Activated T-helper 2 cell treated with anti-CD3 and anti-CD28 coated beads, Interferon-gamma antibody, Interleukin-2, Interleukin-4, amounts not matched to agents 10 μg/mL and 5 μg/mL and 100 μg/mL, durations not matched to agents 14 hours and 24 hours and 36 hours (primary cell): ENCODE measurements at regions of chr14 and their contacts with region 1.

Region 1: GRCh38 chr14:103628684-103629502 is at the start of gene KLC1:
- DNase-seq: peak; percentile 78
- H3K4me3 Mint-ChIP-seq: peak within 1 kb of the TSS; percentile 86
- H3K27ac Mint-ChIP-seq: peak within 1 kb of the TSS; percentile 86
- H3K4me1 Mint-ChIP-seq: peaks cover 26% of the 10 kb centered on the region
- H3K27me3 Mint-ChIP-seq: no peaks in the 10 kb centered on the region
- total RNA-seq, gene KLC1: 161 and 169 TPM in 2 replicates

Region 2: DNA sequence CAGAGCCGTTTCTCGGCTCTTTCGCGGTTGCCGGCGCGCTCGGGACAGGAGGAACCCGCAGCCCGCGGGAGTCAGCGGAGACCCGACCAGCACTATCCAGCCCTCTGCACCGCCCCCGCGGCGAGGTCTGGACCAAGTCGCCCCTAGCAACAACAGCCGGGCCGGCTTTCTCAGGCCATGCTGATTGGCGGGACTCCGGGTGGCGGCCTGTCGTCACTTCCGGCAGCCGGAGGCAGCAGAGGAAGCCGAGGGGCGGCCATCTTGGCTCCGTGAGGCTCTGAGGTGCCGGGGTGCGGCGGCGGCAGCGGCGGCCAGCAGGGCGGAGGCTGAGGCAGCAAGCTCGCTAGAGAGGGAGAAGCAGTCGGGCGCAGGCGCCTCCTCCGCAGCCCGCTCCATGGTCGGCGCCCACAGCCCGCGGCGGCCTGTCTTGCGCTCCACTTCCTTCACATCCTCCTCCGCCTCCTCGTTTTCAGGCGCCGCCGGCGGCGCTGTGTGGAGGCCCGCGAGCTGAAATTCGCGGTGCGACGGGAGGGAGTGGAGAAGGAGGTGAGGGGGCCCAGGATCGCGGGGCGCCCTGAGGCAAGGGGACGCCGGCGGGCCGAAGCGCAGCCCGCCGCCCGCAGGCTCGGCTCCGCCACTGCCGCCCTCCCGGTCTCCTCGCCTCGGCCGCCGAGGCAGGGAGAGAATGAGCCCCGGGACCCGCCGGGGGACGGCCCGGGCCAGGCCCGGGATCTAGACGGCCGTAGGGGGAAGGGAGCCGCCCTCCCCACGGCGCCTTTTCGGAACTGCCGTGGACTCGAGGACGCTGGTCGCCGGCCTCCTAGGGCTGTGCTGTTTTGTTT is 243.5 kb before region 1 on chr14 and contains the start of gene MARK3:
- intact Hi-C with region 1: loop called (anchors 10 kb)
- DNase-seq: peak; percentile 96
- H3K4me3 Mint-ChIP-seq: peak within 1 kb of the TSS; percentile 99
- H3K27ac Mint-ChIP-seq: peak within 1 kb of the TSS; percentile 93
- H3K4me1 Mint-ChIP-seq: peaks cover 27% of the 10 kb centered on the region
- H3K27me3 Mint-ChIP-seq: peaks cover 5% of the 10 kb centered on the region
- total RNA-seq, gene MARK3: 81.4 and 84.1 TPM in 2 replicates

Region 3: GRCh38 chr14:103715052-103716000 is 86.4 kb after region 1 on chr14 and contains the starts of genes XRCC3 and ZFYVE21:
- intact Hi-C with region 1: loop called (anchors 10 kb)
- DNase-seq: peak; percentile 100
- H3K4me3 Mint-ChIP-seq: peak within 1 kb of the TSS; percentile 91
- H3K27ac Mint-ChIP-seq: peak within 1 kb of the TSS; percentile 89
- H3K4me1 Mint-ChIP-seq: peaks cover 30% of the 10 kb centered on the region
- H3K27me3 Mint-ChIP-seq: no peaks in the 10 kb centered on the region
- total RNA-seq, gene XRCC3: 52.9 and 53.7 TPM in 2 replicates
- total RNA-seq, gene ZFYVE21: 24.6 and 27.5 TPM in 2 replicates

Region 4: DNA sequence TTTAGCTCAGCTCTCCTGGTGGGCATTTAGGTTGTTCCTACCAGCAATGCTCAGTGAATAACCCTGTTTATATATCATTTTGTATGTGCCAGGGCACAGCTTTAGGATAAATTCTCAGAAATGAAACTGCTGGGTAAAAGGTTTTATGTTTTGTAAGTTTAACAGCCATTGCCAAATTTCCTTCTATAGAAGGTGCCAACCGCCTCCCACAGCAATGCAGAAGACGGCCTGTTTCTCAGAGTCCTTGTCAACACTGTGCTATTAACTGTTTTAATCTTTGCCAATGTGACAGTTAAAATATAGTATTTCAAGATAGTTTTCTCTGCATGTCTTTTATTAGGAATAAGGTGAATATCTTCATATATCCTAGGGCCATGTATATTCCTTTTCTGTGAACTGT is 153.5 kb after region 1 on chr14:
- intact Hi-C with region 1: no loop called
- DNase-seq: no peak
- H3K4me3 Mint-ChIP-seq: no peak overlapping the region
- H3K27ac Mint-ChIP-seq: no peak overlapping the region
- H3K4me1 Mint-ChIP-seq: no peaks in the 10 kb centered on the region
- H3K27me3 Mint-ChIP-seq: no peaks in the 10 kb centered on the region

Region 5: GRCh38 chr14:103920981-103921854 is 292.3 kb after region 1 on chr14:
- intact Hi-C with region 1: loop called (anchors 5 kb)
- DNase-seq: peak; percentile 94
- H3K4me3 Mint-ChIP-seq: peak overlapping the region; percentile 93
- H3K27ac Mint-ChIP-seq: peak overlapping the region; percentile 68
- H3K4me1 Mint-ChIP-seq: peaks cover 7% of the 10 kb centered on the region
- H3K27me3 Mint-ChIP-seq: peaks cover 5% of the 10 kb centered on the region